Posterior cingulate gyrus (tissue), 11 donors: ENCODE measurements at regions of chr6 and their contacts with region 1.

Region 1: DNA sequence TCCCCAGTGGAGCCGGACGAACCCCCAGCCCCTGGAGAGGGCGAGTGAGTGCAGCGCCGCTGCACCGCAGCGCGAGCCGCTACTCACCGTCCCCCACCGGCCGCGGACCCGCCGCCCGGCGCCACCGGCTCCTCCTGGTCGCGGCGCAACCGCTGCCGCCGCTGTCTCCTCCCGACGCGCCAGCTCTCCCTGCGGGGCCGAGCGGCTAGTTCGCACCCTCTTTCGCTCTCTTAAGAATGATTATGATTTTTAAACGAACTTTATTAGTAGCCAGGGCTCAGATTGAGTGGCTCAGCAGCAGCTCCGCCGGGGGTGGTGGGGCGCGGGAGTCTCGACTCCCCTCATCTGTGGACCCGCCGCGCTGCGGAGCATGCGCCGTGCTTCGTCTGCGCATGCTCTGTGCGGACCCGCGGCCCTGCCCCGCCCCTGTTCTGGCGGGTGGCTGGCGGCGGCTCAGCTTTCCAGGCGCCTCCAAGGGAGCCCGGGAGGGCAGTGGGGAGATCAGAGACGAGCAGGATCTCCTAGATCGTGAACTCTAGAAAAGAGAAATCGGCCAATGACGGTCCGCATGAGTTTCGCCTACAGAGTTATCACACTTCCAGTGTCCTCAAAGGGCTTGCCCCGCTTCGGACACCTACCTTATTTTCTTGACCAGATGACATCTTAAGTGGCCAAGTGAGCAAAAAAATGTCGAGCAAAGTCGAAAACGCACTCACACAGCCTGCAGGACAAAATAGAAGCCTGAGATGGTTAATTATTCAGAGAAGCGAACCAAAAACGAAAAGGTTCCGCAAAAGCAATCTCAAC is at the start of gene RAB23:
- DNase-seq: peak; percentile 69 to 98 (median 81)

Region 2: GRCh38 chr6:57040009-57040408 is 182.1 kb before region 1 on chr6:
- intact Hi-C with region 1: loop called (anchors 10 kb)
- DNase-seq: no peak

Region 3: DNA sequence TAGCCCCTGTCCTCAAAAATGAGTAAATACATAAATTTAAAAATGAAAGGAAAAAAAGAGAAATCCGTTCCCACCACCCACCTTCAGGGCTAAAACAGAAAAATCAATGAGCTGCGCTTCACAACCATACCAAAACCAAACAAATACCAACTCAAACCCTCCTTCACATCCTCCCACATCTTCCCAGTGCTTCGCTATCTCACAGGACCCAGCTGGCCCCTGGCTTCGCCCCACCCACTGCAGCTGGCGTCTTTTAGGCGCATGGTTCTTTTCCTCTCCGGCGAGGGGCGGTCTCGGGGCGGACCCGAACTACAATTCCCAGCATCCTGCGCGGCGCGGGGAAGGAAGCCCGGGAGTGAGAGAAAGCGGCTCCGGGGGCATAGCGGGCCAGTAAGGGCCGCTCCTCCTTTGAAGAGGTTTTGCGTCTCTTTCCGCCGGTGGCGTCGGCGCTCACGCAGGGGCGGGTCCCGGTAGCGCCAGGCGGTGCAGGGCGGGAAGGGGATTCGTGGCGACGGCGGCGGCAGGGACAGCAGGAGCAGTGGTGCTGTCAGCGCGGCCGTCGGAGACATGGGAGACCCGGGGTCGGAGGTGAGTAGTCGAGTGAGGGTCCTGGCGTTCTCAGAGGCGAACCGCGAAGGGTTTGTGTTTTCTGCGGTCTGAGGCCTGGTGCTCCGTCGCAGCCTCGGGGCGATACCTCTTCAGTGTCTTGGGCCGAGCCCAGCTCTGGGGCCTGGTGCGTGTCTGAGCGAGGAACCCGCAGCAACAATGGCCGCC is 132.3 kb before region 1 on chr6 and contains the start of gene ZNF451:
- intact Hi-C with region 1: loop called (anchors 5 kb)
- DNase-seq: peak; percentile 97 to 100 (median 98)

Region 4: GRCh38 chr6:57147401-57147800 is 74.7 kb before region 1 on chr6:
- intact Hi-C with region 1: no loop called
- DNase-seq: no peak

Region 5: GRCh38 chr6:57182017-57182432 is 40.1 kb before region 1 on chr6:
- intact Hi-C with region 1: loop called (anchors 5 kb)
- DNase-seq: no peak